AG04449 (cell line): ENCODE measurements at regions of chr3 and their contacts with region 1.

Region 1: DNA sequence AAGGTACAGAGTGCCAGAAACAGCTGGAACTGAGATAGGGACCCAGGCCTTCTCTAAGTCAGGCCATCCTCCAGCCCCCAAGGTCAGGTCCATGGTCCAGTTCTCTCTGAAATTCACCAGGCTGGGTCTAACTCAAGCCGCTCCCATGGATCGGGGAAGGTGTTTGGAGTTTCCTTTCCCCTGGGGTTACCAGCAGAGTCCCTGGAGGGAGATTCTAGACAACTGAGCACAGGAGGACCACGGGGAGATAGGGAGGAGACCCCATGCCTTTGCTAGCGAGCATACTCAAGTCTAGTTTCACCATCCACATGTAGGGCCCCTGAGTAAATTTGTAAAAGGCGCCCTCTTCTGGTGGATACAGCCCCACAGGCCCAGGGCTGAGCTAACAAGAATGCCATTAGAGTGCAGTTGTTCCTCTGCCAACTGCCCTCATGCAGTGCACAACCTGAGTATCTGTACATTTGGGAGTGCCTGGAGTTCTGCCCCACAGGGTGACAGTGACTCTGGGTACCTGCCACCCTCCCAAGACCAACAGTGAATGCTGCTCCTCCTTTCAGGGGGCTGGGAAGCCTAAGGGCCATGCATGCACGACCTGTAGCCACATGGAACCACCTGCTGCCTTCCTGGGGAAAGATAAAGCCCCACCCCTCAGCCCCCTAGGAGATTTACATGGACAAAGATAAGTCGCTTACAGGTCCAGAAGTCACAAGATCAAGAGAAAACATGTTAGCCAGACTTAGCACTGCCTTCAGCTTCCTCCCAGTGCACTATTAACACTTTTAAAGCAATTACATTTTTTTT is 89.0 kb downstream of the IQSEC1 start:
- DNase-seq: no peak
- H3K4me3 ChIP-seq: no peak overlapping the region
- CTCF ChIP-seq: peak; percentile 77

Region 2: DNA sequence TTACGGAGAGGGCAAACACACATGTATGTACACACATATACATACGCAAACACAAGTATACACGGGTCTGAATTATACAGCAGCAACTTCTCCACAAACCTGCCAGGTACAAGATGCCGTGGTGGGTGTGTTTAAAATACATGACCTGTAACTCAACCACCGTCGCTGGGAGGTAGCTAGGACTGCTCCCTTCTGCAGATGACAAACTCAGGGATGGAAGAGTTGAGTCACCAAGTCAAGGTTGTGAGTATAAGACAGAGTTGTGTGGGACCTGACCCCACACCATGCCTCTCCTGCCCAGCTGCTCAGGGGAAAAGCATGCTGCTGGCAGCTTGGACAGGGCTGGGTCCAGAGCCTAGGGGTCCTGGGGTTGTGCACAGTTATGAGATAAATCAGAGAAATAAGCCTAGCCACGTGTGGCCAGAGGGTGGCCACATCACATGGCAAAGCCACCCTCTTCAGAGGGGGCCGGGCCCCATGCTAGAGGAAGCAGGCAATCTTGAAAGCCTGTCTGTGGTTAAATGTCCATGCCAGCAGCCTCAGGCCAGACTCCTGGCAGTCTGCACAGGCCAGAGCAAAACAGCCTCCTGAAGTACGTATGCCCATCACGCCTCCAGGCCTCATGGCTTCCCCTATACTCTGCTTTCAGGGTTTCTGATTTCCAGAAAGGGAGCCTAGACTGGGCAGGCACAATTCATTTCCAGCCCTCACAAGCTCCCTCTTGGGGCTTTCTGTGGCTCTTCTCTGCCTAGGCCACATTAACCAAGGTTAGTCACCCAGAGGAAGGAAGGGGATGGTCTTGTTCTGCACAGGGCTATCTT is 35.1 kb before region 1 on chr3:
- CTCF ChIA-PET with region 1: interaction called, 23 read pairs
- POLR2A ChIA-PET with region 1: no interaction called
- DNase-seq: no peak
- H3K4me3 ChIP-seq: no peak overlapping the region
- CTCF ChIP-seq: no peak

Region 3: GRCh38 chr3:12967606-12968351 is 16.4 kb before region 1 on chr3:
- CTCF ChIA-PET with region 1: interaction called, 93 read pairs
- POLR2A ChIA-PET with region 1: no interaction called
- DNase-seq: no peak
- H3K4me3 ChIP-seq: peak overlapping the region; percentile 86
- CTCF ChIP-seq: no peak

Region 4: GRCh38 chr3:12994607-12995388 is 10.6 kb after region 1 on chr3:
- CTCF ChIA-PET with region 1: interaction called, 56 read pairs
- POLR2A ChIA-PET with region 1: no interaction called
- DNase-seq: no peak
- H3K4me3 ChIP-seq: peak overlapping the region; percentile 71
- CTCF ChIP-seq: peak; percentile 92

Region 5: GRCh38 chr3:13002398-13003124 is 18.3 kb after region 1 on chr3:
- CTCF ChIA-PET with region 1: interaction called, 13 read pairs
- POLR2A ChIA-PET with region 1: no interaction called
- DNase-seq: no peak
- H3K4me3 ChIP-seq: no peak overlapping the region
- CTCF ChIP-seq: no peak